ENCODE measurements at regions of chr2 and their contacts with region 1.

Region 1: GRCh38 chr2:30208452-30208851 is 22.9 kb upstream of the LBH start:
- DNase-seq: peak; percentile 73
- H3K4me3 Mint-ChIP-seq: no peak overlapping the region
- H3K27ac Mint-ChIP-seq: no peak overlapping the region
- H3K4me1 Mint-ChIP-seq: peaks cover 6% of the 10 kb centered on the region
- H3K27me3 Mint-ChIP-seq: no peaks in the 10 kb centered on the region
- CTCF ChIP-seq: peak; percentile 90

Region 2: DNA sequence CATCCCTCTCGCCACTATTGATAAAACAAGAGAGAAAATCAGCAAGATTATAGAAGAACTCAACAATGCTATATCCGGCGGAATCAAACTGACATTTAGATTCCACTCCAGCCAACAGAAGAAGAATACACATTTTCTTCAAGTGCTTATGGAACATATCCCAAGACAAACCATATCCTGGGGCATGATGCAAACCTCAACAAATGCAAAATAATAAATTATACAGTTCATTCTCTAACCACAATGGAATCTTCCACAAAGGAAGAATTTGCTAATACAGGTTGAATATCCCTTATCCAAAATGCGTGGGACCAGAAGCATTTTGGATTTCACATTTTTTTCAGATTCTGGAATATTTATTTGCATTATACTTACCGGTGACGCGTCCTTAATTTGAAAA is 113.0 kb before region 1 on chr2:
- CTCF ChIA-PET with region 1: interaction called, 7 read pairs
- POLR2A ChIA-PET with region 1: no interaction called
- intact Hi-C with region 1: loop called (anchors 2 kb)
- DNase-seq: no peak
- H3K4me3 Mint-ChIP-seq: no peak overlapping the region
- H3K27ac Mint-ChIP-seq: no peak overlapping the region
- H3K4me1 Mint-ChIP-seq: no peaks in the 10 kb centered on the region
- H3K27me3 Mint-ChIP-seq: peaks cover 68% of the 10 kb centered on the region
- CTCF ChIP-seq: no peak

Region 3: DNA sequence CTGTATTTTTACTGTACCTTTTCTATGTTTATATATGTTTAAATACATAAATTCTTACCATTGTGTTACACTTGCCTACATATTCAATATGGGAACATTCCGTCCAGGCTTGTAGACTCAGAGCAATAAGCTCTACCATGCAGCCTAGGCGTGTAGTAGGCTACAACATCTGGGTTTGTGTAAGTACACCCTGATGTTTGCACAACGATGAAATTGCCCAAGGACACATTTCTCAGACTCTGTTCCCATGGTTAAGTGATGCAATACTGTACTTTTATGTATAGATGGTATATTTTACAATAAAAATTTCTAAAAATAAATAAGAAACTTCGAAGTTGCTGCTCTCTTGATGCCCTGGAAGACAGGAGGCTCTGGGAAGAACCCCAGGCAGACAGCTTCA is 23.3 kb before region 1 on chr2:
- CTCF ChIA-PET with region 1: interaction called, 26 read pairs
- POLR2A ChIA-PET with region 1: interaction called, 4 read pairs
- intact Hi-C with region 1: no loop called
- DNase-seq: peak; percentile 96
- H3K4me3 Mint-ChIP-seq: no peak overlapping the region
- H3K27ac Mint-ChIP-seq: peak overlapping the region; percentile 97
- H3K4me1 Mint-ChIP-seq: peaks cover 20% of the 10 kb centered on the region
- H3K27me3 Mint-ChIP-seq: no peaks in the 10 kb centered on the region
- CTCF ChIP-seq: no peak

Region 4: GRCh38 chr2:30239308-30239985 is 31.0 kb after region 1 on chr2:
- CTCF ChIA-PET with region 1: interaction called, 18 read pairs
- POLR2A ChIA-PET with region 1: no interaction called
- intact Hi-C with region 1: no loop called
- DNase-seq: peak; percentile 76
- H3K4me3 Mint-ChIP-seq: no peak overlapping the region
- H3K27ac Mint-ChIP-seq: no peak overlapping the region
- H3K4me1 Mint-ChIP-seq: peaks cover 14% of the 10 kb centered on the region
- H3K27me3 Mint-ChIP-seq: no peaks in the 10 kb centered on the region
- CTCF ChIP-seq: peak; percentile 91

Region 5: DNA sequence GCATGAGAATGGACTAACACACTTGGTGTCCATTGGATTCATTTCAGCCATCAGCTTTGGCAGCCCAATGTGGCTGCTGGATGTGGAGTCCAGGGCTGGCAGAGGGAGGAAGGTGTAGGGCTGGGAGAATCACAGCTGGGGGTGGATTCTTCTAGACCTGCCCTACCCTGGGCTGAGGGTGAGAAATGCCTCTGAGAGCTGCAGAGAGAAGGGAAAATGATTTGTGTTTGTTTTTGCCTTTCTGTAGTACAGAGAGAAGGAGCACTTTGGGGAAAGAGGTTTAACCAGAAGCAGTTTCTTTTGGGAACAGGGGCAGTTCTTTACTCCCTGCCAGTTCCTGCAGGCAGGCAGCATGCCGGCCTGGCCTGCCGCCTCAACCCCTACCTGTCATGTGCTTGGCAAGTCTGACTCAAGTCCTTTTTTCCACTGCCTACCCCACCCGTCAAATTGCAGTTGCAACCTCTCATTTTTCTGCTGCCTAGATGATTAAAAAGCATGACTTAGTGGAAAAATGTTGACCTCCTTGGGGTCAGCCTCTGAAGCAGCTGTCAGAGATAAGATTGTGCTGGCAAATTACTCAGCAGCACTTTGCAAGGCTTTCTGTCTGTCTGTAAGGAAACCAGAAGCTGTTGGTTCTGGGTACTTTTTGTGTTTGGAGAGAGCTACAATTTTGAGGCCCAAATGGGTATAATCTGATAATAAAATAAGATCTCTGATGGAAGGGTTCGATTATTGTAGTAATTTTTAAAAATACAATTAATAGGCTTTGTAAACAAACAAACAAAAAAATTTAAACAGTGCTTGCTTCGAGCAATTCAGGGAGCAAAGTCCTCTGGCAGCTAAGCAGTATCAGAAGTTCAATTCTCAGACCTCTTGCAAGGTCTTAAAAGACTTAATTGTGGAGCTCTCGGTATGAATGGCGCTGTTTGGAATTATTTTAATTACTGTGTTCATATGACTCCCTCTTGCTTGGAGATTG is 44.6 kb after region 1 on chr2:
- CTCF ChIA-PET with region 1: no interaction called
- POLR2A ChIA-PET with region 1: no interaction called
- intact Hi-C with region 1: no loop called
- DNase-seq: no peak
- H3K4me3 Mint-ChIP-seq: no peak overlapping the region
- H3K27ac Mint-ChIP-seq: peak overlapping the region; percentile 42
- H3K4me1 Mint-ChIP-seq: peaks cover 14% of the 10 kb centered on the region
- H3K27me3 Mint-ChIP-seq: no peaks in the 10 kb centered on the region
- CTCF ChIP-seq: no peak

Region 6: DNA sequence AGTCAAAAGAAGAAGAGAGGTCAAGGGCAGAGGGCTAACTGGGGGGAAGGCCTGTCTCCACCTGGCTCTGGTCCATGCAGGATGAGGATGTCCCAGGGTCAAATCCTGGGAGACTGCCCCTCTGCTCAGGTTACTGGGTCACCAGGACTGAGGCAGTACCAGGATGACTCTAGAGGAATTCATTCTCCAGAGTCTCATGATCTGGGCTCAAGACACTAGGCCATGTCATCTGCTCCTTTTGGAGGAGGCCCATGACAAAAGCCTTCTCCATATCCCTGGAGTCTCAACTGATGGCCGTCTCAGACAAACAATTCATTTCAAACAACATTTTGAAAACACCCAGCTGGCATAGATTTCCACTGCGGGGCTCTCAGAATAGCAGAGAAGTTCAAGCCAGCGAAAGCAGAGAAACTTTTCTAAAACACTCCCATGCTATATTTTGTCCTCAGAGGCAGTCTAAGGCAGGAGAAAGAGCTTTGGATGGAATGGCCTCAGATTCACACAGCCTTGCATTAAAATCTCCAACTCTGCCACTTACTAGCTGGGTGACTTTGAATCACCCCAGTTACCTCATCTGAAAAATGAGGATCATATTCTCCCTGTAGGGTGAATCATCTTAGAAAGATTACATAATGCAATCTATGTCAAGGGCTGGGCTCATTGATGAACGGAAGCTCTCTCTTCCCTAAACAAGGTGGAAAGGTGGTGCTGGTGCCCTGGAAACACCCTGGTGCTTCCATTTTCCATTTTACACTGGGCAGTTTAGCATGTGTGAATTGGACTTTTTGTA is 189.8 kb after region 1 on chr2:
- CTCF ChIA-PET with region 1: no interaction called
- POLR2A ChIA-PET with region 1: no interaction called
- intact Hi-C with region 1: no loop called
- DNase-seq: peak; percentile 44
- H3K4me3 Mint-ChIP-seq: no peak overlapping the region
- H3K27ac Mint-ChIP-seq: no peak overlapping the region
- H3K4me1 Mint-ChIP-seq: no peaks in the 10 kb centered on the region
- H3K27me3 Mint-ChIP-seq: peaks cover 19% of the 10 kb centered on the region
- CTCF ChIP-seq: no peak

Region 7: DNA sequence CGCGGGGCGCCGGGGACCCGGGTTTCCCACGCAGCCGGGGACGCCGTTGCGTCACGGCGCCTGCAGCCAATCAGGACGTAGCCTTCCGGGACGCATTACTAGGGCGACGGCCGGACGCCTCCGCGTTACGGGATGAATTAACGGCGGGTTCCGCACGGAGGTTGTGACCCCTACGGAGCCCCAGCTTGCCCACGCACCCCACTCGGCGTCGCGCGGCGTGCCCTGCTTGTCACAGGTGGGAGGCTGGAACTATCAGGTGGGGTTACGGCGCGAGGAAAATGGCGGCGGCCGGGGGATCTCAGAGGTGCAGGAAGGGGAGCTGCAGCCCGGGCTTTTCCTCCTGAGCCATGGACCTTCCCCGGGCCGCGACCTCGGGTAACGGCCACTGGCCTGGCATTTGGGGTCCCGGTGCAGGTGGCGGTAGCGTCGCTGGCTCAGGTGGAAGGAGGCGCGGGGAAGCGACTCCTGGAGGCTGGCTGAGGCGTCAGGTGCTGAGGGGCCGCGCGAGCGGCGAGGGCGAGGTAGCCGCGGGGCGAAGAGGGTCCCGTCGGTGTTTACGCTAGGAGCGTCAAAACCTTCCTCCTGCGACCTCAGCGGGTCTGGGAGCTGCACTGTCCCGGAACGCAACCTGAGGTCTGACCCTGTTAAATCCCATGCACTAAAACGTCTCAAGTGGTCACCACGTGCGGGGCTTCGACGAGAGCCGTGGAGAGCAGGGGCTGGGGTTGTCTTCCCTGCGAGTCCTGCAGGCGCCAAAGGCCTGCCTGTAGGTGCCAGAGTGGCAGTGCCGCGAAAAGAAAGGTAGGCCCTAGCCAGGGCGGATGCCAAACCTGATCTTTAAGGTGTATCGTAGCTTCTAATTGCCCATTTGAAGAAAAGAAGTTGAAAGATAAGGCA is 238.9 kb after region 1 on chr2 and contains the start of gene LCLAT1:
- CTCF ChIA-PET with region 1: interaction called, 21 read pairs
- POLR2A ChIA-PET with region 1: no interaction called
- intact Hi-C with region 1: no loop called
- DNase-seq: peak; percentile 78
- H3K4me3 Mint-ChIP-seq: peak within 1 kb of the TSS; percentile 88
- H3K27ac Mint-ChIP-seq: peak within 1 kb of the TSS; percentile 99
- H3K4me1 Mint-ChIP-seq: peaks cover 4% of the 10 kb centered on the region
- H3K27me3 Mint-ChIP-seq: no peaks in the 10 kb centered on the region
- CTCF ChIP-seq: no peak
- total RNA-seq, gene LCLAT1: 27.5 and 29.0 TPM in 2 replicates

Region 8: GRCh38 chr2:30686000-30686399 is 477.5 kb after region 1 on chr2:
- CTCF ChIA-PET with region 1: interaction called, 36 read pairs
- POLR2A ChIA-PET with region 1: no interaction called
- intact Hi-C with region 1: no loop called
- DNase-seq: no peak
- H3K4me3 Mint-ChIP-seq: no peak overlapping the region
- H3K27ac Mint-ChIP-seq: no peak overlapping the region
- H3K4me1 Mint-ChIP-seq: no peaks in the 10 kb centered on the region
- H3K27me3 Mint-ChIP-seq: no peaks in the 10 kb centered on the region
- CTCF ChIP-seq: no peak

Region 9: DNA sequence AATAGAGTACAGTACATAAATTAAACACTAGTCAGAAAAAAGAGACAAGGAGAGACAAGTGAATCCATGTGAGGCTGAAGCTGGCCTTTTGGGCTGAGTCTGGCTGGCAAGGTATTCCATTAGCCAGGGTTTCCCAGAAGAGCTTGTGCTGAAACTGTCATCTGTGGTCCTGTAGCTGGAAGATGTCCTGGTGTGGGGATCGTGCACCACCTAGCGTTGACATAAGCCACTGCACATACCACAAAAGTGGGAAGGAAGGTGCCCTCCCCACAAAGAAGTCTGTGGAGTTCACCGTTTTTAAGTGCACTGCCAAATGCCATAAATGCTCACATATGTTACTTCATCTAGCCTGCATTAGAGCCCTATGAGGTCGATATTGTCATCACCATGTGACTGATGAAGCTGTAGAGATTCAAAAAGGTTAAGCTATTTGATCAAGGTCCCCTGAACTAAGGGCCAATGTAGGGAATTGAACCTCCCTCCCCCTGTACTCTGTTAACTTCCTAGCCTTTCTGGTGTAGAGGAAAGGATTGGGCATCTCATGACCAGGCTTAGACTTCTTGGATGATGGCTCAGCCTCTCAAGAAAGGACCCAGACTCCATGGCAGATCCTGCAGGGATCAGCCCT is 961.7 kb after region 1 on chr2:
- CTCF ChIA-PET with region 1: interaction called, 3 read pairs
- POLR2A ChIA-PET with region 1: no interaction called
- intact Hi-C with region 1: loop called (anchors 10 kb)
- DNase-seq: peak; percentile 71
- H3K4me3 Mint-ChIP-seq: no peak overlapping the region
- H3K27ac Mint-ChIP-seq: no peak overlapping the region
- H3K4me1 Mint-ChIP-seq: no peaks in the 10 kb centered on the region
- H3K27me3 Mint-ChIP-seq: peaks cover 18% of the 10 kb centered on the region
- CTCF ChIP-seq: peak; percentile 96